Transverse colon (tissue), 4 donors: ENCODE measurements at regions of chr13 and their contacts with region 1.

Region 1: DNA sequence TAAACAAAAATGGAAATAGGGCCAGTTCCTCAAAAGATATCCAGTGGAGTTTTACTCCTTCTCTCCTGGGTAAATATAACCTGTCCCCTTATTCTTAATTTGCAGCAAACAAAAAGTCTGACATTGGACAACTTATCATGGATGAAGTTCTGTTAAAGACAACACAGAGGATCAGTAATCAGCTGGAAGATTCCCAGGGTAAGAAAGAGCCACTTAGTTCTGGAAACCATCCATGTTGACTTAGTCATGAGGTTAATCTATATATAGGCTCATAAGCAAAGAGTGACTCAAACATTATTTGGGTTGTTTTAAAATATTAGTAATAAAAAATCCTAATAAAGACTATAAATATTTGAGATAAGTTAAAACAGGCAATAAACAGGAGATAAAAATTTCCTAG is 40.5 kb upstream of the EBPL start:
- DNase-seq: no peak
- H3K4me3 ChIP-seq: no peak overlapping the region
- H3K27ac ChIP-seq: no peak overlapping the region
- H3K4me1 ChIP-seq: no peaks in the 10 kb centered on the region
- H3K27me3 ChIP-seq: no peaks in the 10 kb centered on the region
- CTCF ChIP-seq: no peak
- EP300 ChIP-seq: no peak
- POLR2A ChIP-seq: no peak

Region 2: GRCh38 chr13:49495783-49496762 is 235.7 kb before region 1 on chr13 and contains the start of gene PHF11:
- in situ Hi-C with region 1: no loop called
- intact Hi-C with region 1: no loop called
- DNase-seq: peak; percentile 87
- H3K4me3 ChIP-seq: peak within 1 kb of the TSS; percentile 17 to 69 (median 56)
- H3K27ac ChIP-seq: peak within 1 kb of the TSS; percentile 91 to 96 (median 92)
- H3K4me1 ChIP-seq: peaks cover 0 to 9% (median 7%) of the 10 kb centered on the region in 4 donors
- H3K27me3 ChIP-seq: no peaks in the 10 kb centered on the region
- CTCF ChIP-seq: peak in 2 of 5 experiments; percentile 16
- EP300 ChIP-seq: no peak
- POLR2A ChIP-seq: peak; percentile 74
- total RNA-seq, gene PHF11: 4.2 to 32.1 (median 18.7) TPM

Region 3: GRCh38 chr13:49776871-49777270 is 45.1 kb after region 1 on chr13:
- in situ Hi-C with region 1: no loop called
- intact Hi-C with region 1: no loop called
- DNase-seq: no peak
- H3K4me3 ChIP-seq: no peak overlapping the region
- H3K27ac ChIP-seq: no peak overlapping the region
- H3K4me1 ChIP-seq: peaks cover 0 to 40% (median 21%) of the 10 kb centered on the region in 4 donors
- H3K27me3 ChIP-seq: no peaks in the 10 kb centered on the region
- CTCF ChIP-seq: no peak
- EP300 ChIP-seq: no peak
- POLR2A ChIP-seq: no peak

Region 4: GRCh38 chr13:51112771-51113170 is 1381.0 kb after region 1 on chr13:
- in situ Hi-C with region 1: no loop called
- intact Hi-C with region 1: loop called (anchors 5 kb)
- DNase-seq: no peak
- H3K4me3 ChIP-seq: no peak overlapping the region
- H3K27ac ChIP-seq: no peak overlapping the region
- H3K4me1 ChIP-seq: no peaks in the 10 kb centered on the region
- H3K27me3 ChIP-seq: no peaks in the 10 kb centered on the region
- CTCF ChIP-seq: no peak
- EP300 ChIP-seq: no peak
- POLR2A ChIP-seq: no peak